Esophagus muscularis mucosa (tissue), 4 donors: ENCODE measurements at regions of chr15 and their contacts with region 1.

Region 1: DNA sequence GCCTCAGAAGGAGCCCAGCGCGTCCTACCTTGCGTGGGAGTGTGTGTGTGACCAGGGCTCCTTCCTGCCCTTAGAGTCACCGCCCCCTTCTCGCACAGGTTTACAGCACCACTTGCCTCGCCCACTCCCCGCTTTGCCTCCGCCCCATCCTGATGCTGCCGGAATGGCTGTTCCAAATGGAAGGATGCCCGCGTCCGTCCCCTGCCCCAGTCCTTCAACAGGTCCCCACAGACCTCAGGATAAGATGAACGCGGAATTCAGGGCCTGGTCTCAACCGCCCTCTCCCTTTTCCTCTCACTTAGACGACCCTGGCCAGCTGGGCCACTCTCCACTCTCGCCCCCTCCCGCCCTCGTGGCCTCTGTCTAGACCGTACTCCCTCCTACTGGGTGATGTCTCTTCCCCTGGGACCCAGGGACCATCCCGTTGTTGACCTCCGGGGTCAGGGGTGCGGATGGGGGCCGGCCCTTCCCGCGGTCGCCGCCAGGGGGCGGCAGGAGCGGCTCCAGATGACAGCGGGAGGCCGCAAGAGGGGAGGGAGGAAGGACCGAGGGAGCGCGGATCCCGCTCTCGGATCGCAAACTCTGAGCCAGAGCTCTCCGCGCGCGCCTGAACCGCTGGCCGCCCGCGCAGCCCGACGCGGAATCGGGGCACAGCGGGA is at the start of gene THSD4:
- DNase-seq: no peak
- H3K4me3 ChIP-seq: peak within 1 kb of the TSS; percentile 53 to 75 (median 59)
- H3K27ac ChIP-seq: peak within 1 kb of the TSS in 3 of 4 donors; percentile 38 to 60 (median 44)
- H3K4me1 ChIP-seq: peaks cover 3 to 12% (median 9%) of the 10 kb centered on the region in 4 donors
- H3K27me3 ChIP-seq: peaks cover 0 to 3% (median 0%) of the 10 kb centered on the region in 4 donors
- CTCF ChIP-seq: peak; percentile 87 to 98 (median 94)
- EP300 ChIP-seq: no peak
- POLR2A ChIP-seq: no peak
- total RNA-seq, gene THSD4: 3.2 to 6.6 (median 5.6) TPM

Region 2: GRCh38 chr15:71237456-71238188 is 122.6 kb after region 1 on chr15:
- intact Hi-C with region 1: no loop called
- DNase-seq: no peak
- H3K4me3 ChIP-seq: no peak overlapping the region
- H3K27ac ChIP-seq: no peak overlapping the region
- H3K4me1 ChIP-seq: no peaks in the 10 kb centered on the region
- H3K27me3 ChIP-seq: no peaks in the 10 kb centered on the region
- CTCF ChIP-seq: no peak
- EP300 ChIP-seq: no peak
- POLR2A ChIP-seq: no peak

Region 3: GRCh38 chr15:71386448-71387236 is 271.6 kb after region 1 on chr15:
- intact Hi-C with region 1: loop called (anchors 10 kb)
- DNase-seq: no peak
- H3K4me3 ChIP-seq: no peak overlapping the region
- H3K27ac ChIP-seq: no peak overlapping the region
- H3K4me1 ChIP-seq: peaks cover 27 to 33% (median 32%) of the 10 kb centered on the region in 4 donors
- H3K27me3 ChIP-seq: no peaks in the 10 kb centered on the region
- CTCF ChIP-seq: peak; percentile 47 to 66 (median 58)
- EP300 ChIP-seq: no peak
- POLR2A ChIP-seq: no peak

Region 4: DNA sequence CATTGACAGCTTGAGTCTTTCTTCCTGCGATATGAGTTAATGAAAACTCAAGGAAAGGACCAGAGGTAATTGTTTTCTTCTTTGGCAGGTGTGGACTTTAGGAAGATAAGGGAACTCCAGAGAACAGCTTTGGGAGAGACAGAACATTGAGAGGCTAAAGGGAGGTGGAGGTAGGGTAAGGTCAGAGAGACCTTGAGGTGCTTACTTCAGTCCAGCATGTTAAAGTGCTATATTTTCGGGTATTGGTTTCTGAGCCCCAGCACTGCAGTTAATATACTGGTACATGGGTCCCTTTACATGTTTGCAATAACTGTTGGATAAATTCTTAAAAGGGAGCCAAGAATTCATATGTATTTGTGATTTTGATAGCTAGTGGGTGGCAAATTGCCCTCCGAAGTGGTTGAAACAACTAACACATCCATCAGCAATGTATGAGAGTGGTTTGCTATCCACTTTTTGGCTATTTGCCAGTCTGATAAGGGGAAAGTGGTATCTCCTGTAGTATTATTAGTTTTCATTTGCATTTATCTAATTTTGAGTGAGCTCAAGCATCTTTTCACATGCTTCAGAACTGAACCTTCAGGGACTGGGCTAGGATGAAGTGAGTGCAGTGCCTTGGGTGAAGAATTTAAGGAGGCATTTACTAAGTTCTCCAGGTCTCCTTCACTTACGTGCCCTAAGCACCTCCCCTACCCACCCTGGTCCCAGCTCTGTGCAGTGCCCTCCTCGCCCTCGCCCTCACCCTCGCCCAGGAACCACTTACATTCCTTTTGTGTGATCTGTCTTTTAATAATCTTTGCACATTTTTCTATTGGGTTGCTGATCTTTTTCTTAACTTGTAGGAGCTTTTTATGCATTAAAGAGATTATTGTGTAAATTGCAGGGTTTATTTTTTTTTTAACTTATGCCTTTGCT is 322.6 kb after region 1 on chr15:
- intact Hi-C with region 1: loop called (anchors 2 kb)
- DNase-seq: no peak
- H3K4me3 ChIP-seq: no peak overlapping the region
- H3K27ac ChIP-seq: no peak overlapping the region
- H3K4me1 ChIP-seq: peaks cover 0 to 5% (median 0%) of the 10 kb centered on the region in 4 donors
- H3K27me3 ChIP-seq: no peaks in the 10 kb centered on the region
- CTCF ChIP-seq: no peak
- EP300 ChIP-seq: no peak
- POLR2A ChIP-seq: no peak